Heart right ventricle (tissue), 16 donors: ENCODE measurements at regions of chr6 and their contacts with region 1.

Region 1: DNA sequence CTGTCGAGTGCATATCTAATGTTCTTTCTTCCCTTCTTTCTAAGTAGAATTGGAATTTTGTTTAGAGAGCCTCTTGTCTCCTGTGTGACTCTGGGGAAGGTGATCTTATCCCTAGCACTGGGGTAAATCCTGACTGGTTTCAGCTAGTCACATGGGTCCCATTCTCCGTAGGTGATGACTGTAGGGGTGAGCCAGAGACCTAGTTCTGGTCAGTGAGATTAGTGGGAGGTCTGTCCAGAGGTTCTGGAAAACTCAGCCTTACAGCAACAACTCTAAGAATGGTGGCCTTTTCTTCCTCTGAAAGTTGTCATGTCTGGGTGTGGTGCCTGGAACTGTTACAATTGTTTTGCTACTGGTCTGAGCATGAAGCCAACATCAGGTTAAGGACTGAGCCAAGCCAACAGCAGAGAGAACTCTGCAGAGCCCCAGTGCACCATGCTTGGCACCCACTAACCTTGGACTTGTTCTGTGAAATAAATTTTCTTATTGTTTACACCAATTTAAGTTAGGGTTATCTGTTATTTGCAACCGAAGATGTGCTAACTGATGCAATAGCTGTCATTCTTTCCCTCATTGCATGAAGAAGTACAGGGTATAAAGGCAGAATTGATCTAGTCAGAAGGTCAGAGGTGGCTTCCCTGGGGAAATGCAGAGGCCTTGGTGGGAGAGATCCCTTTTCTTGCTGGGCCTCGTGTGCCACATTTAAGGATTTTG is 56.8 kb upstream of the TULP4 start:
- DNase-seq: no peak
- ATAC-seq: peak in 2 of 8 donors; percentile 7 to 31
- H3K4me3 ChIP-seq: no peak overlapping the region
- H3K27ac ChIP-seq: no peak overlapping the region
- H3K4me1 ChIP-seq: peaks cover 0 to 14% (median 11%) of the 10 kb centered on the region in 9 donors
- H3K27me3 ChIP-seq: no peaks in the 10 kb centered on the region
- CTCF ChIP-seq: no peak

Region 2: DNA sequence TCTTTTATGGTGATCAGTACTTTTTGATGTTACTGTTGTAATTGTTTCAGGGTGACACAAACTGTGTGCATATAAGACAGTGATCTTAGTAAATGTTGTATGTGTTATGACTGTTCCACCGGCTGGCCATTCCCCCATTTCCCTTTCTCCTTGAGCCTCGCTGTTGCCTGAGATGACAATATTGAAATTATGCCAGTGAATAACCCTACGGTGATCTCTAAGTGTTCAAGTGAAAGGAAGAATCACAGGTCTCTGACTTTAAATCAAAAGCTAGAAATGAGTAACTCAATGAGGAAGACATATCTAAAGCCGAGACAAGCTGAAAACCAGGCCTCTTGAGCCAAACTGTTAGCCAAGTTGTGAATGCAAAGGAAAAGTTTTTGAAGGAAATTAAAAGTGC is 89.1 kb after region 1 on chr6:
- intact Hi-C with region 1: no loop called
- DNase-seq: no peak
- ATAC-seq: no peak
- H3K4me3 ChIP-seq: no peak overlapping the region
- H3K27ac ChIP-seq: no peak overlapping the region
- H3K4me1 ChIP-seq: no peaks in the 10 kb centered on the region
- H3K27me3 ChIP-seq: no peaks in the 10 kb centered on the region
- CTCF ChIP-seq: no peak

Region 3: GRCh38 chr6:159899994-159900745 is 1644.7 kb after region 1 on chr6:
- intact Hi-C with region 1: loop called in 1 of 10 experiments (anchors 10 kb)
- DNase-seq: no peak
- ATAC-seq: no peak
- H3K4me3 ChIP-seq: no peak overlapping the region
- H3K27ac ChIP-seq: no peak overlapping the region
- H3K4me1 ChIP-seq: no peaks in the 10 kb centered on the region
- H3K27me3 ChIP-seq: no peaks in the 10 kb centered on the region
- CTCF ChIP-seq: no peak